ENCODE measurements at regions of chr19 and their contacts with region 1.

Region 1: DNA sequence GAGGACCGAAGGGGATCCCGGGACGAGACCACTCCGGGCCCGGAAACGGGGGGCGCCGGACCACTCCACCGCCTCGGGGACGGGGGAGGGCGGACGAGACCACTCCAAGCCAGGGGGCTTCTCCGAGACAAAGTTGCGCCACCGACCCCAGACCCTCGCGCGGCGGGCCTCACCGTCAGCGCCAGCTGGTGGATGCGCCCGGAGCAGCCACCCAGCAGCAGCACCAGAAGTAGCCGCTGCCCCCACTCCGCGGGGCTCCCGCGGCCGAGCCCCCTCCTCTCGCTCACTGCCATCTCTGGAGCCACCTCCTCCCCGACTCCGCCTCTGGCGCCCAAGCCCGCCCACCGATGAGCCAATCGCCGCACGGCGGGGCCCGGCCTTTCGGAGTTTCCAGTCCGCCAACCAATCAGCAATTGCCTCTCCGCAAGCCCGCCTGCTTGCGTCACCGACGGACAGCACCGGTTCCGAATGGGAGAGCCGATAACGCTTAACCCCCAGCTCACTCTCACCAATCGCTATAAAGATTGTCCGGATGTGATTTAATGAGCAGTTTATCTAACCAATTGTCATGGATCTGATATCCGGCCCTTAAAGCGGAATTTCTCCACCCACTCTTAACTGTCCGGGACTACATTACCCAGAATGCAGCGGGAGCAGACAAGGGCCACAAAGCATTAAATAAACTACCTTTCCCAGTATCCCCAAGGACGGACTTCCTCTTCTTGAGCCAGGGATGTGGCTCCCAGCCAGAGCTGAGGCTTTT is at the start of gene GPR108:
- DNase-seq: peak; percentile 98
- ATAC-seq: peak; percentile 74
- H3K4me3 Mint-ChIP-seq: peak within 1 kb of the TSS; percentile 96
- H3K27ac Mint-ChIP-seq: peak within 1 kb of the TSS; percentile 96
- H3K4me1 Mint-ChIP-seq: peaks cover 44% of the 10 kb centered on the region
- H3K27me3 Mint-ChIP-seq: no peaks in the 10 kb centered on the region
- CTCF ChIP-seq: no peak
- total RNA-seq, gene GPR108: 53.5 and 55.6 TPM in 2 replicates

Region 2: DNA sequence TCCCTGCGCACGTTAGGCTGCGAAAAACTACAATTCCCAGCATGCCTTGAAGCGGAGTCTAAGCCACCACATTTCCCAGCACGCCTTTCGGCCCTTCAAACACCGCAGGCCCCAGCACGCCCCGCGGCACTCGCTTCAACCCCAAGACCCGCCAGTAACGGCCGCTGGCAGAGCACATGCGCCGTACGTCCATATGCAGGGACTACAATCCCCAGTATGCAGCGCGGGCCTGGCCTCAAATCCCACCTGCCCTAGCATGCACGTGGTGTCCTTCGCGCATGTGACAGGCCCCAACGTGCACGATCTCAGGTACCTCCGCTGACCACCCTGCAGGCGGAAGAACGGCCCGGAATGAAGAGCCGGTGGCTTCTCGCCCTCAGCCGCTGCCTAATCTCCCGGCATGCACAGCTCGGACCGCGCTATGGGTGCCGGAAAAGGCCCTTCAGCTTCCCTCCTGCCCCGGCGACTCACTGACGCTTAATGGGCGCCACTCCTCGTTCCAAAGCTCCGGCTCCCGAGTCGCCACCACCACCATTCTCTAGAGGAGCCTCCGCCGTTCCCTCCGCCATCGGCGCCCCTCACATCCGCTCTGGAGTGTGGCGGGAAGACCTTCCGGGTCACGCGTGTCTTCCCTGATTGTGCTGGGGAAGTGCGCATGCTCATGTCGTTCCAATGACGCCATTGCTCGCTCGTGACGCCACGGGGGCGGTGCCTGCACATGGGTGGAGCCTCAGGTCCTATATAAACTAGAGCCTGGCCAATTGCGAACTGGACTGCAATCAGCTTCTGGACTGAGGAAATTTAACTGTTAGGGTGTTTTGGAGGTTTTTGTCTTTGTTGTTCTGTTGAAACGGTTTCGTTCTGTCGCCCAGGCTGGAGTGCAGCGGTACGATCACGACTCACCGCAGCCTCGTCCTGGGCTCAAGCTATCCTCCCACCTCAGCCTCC is 946.6 kb before region 1 on chr19 and contains the start of gene DUS3L:
- CTCF ChIA-PET with region 1: no interaction called
- POLR2A ChIA-PET with region 1: no interaction called
- intact Hi-C with region 1: loop called (anchors 5 kb)
- DNase-seq: peak; percentile 89
- ATAC-seq: peak; percentile 93
- H3K4me3 Mint-ChIP-seq: peak within 1 kb of the TSS; percentile 97
- H3K27ac Mint-ChIP-seq: peak within 1 kb of the TSS; percentile 100
- H3K4me1 Mint-ChIP-seq: peaks cover 15% of the 10 kb centered on the region
- H3K27me3 Mint-ChIP-seq: peaks cover 3% of the 10 kb centered on the region
- CTCF ChIP-seq: no peak
- total RNA-seq, gene DUS3L: 82.8 and 89.1 TPM in 2 replicates

Region 3: DNA sequence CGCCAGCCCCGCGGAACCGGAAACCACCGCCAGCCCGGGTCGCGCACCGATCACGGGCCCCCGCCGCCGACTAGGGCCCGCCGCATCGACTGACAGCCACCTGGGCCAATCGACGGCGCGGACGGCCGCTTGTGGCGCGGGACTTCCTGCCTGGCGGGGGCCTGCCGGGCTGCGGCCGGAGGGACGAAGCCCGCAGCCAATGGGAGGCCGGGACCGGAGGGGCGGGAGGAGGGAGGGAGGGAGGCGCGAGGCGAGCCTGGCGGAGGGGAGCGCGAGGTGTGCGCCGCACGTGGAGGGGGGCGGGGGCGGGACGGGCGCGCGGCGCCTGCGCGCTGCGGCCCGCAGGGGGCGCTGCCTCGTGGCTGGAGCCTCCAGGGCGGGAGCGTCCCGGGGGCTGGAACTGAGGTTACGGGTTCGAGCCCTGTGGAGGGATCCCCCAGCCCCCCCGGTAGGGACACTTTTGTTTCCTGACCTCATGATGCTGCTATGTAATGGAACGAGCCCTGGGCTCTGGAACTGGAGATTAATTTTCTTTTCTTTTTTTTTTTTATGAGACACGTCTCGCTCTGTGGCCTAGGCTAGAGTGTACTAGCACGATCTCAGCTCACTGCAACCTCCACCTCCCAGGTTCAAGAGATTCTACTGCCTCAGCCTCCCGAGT is 457.4 kb before region 1 on chr19 and contains the start of gene MLLT1:
- CTCF ChIA-PET with region 1: no interaction called
- POLR2A ChIA-PET with region 1: no interaction called
- intact Hi-C with region 1: loop called (anchors 5 kb)
- DNase-seq: peak; percentile 95
- ATAC-seq: peak; percentile 95
- H3K4me3 Mint-ChIP-seq: peak within 1 kb of the TSS; percentile 88
- H3K27ac Mint-ChIP-seq: peak within 1 kb of the TSS; percentile 68
- H3K4me1 Mint-ChIP-seq: peaks cover 35% of the 10 kb centered on the region
- H3K27me3 Mint-ChIP-seq: no peaks in the 10 kb centered on the region
- CTCF ChIP-seq: peak; percentile 36
- total RNA-seq, gene MLLT1: 39.0 and 41.3 TPM in 2 replicates

Region 4: DNA sequence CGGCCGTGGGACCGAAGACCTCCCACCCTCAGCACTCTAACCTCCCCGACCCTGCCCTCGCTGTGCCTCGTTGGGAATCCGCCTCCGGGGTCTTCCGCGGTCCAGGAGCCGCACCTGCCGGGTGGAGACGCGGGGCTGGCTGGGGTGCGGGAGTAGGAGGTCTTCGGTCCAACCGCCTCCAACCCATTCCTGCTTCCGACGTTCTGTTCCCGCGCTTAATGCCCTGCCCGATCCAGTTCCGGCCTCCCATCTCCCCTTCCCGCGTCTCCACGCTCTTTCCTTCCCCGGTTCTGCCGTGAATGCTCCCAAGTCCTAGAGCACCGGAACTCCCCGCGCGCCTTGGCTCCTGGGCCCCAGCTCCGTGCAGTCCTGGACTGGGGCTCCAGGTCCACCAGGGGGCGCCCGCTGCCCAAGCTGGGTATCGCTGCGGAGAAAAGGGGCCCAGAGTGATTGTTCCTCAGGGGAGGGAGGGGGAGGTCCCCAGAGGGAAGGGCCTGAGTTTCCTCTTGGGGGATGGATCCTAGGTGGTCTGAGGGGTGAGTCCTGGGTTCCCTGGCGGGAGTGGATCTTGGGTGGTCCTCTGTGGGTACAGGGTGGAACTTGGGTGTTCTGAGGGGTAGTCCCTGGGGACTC is 220.7 kb before region 1 on chr19:
- CTCF ChIA-PET with region 1: interaction called, 31 read pairs
- POLR2A ChIA-PET with region 1: interaction called, 34 read pairs
- intact Hi-C with region 1: loop called (anchors 1 kb)
- DNase-seq: peak; percentile 92
- ATAC-seq: peak; percentile 63
- H3K4me3 Mint-ChIP-seq: peak overlapping the region; percentile 97
- H3K27ac Mint-ChIP-seq: peak overlapping the region; percentile 59
- H3K4me1 Mint-ChIP-seq: peaks cover 45% of the 10 kb centered on the region
- H3K27me3 Mint-ChIP-seq: no peaks in the 10 kb centered on the region
- CTCF ChIP-seq: peak; percentile 84

Region 5: DNA sequence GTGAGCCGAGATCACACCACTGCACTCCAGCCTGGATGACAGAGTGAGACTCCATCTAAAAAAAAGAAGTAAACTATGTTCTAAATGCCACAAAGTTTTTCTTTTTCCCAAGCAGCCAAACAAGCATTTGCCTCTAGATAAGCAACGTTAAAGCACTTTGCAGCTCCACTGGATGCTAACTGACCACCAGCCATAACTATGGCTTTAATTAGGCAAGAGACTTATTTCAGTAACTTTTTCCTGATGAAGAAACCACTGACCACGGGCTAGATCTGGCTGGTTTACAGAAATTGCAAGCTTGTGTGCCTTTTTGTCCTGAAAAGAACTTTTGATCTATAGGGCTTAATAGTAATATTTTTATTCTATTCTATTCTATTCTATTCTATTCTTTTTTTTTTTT is 168.6 kb before region 1 on chr19:
- CTCF ChIA-PET with region 1: no interaction called
- POLR2A ChIA-PET with region 1: no interaction called
- intact Hi-C with region 1: no loop called
- DNase-seq: no peak
- ATAC-seq: no peak
- H3K4me3 Mint-ChIP-seq: no peak overlapping the region
- H3K27ac Mint-ChIP-seq: no peak overlapping the region
- H3K4me1 Mint-ChIP-seq: no peaks in the 10 kb centered on the region
- H3K27me3 Mint-ChIP-seq: peaks cover 16% of the 10 kb centered on the region
- CTCF ChIP-seq: no peak

Region 6: DNA sequence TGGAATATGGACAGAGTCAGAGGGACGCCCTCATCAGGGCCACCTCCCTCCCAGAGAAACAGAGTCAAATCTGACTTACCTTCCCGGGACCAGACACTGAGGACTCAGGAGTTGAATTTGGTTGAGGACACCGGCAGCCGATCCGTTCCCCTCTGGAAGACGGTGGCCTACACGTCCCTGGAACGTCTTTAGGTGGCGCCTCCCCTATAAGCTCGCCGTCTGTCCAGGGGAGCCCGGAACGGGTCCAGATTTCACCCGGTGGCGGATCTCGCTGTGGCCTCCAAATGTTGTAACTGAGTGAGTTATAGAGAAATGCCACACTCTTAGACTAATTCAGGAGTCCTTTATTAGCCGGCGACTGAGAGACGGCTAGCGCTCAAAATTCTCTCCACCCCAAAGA is 76.5 kb before region 1 on chr19:
- CTCF ChIA-PET with region 1: no interaction called
- POLR2A ChIA-PET with region 1: no interaction called
- intact Hi-C with region 1: loop called (anchors 2 kb)
- DNase-seq: no peak
- ATAC-seq: no peak
- H3K4me3 Mint-ChIP-seq: no peak overlapping the region
- H3K27ac Mint-ChIP-seq: no peak overlapping the region
- H3K4me1 Mint-ChIP-seq: peaks cover 19% of the 10 kb centered on the region
- H3K27me3 Mint-ChIP-seq: peaks cover 18% of the 10 kb centered on the region
- CTCF ChIP-seq: no peak

Region 7: GRCh38 chr19:6753178-6754031 is 15.9 kb after region 1 on chr19:
- CTCF ChIA-PET with region 1: interaction called, 4 read pairs
- POLR2A ChIA-PET with region 1: interaction called, 12 read pairs
- intact Hi-C with region 1: loop called (anchors 1 kb)
- DNase-seq: peak; percentile 91
- ATAC-seq: peak; percentile 93
- H3K4me3 Mint-ChIP-seq: peak overlapping the region; percentile 87
- H3K27ac Mint-ChIP-seq: peak overlapping the region; percentile 82
- H3K4me1 Mint-ChIP-seq: peaks cover 33% of the 10 kb centered on the region
- H3K27me3 Mint-ChIP-seq: no peaks in the 10 kb centered on the region
- CTCF ChIP-seq: no peak

Region 8: GRCh38 chr19:7348587-7349230 is 611.2 kb after region 1 on chr19 and contains the start of gene ARHGEF18:
- CTCF ChIA-PET with region 1: no interaction called
- POLR2A ChIA-PET with region 1: no interaction called
- intact Hi-C with region 1: loop called (anchors 5 kb)
- DNase-seq: peak; percentile 56
- ATAC-seq: peak; percentile 36
- H3K4me3 Mint-ChIP-seq: peak within 1 kb of the TSS; percentile 87
- H3K27ac Mint-ChIP-seq: peak within 1 kb of the TSS; percentile 95
- H3K4me1 Mint-ChIP-seq: peaks cover 90% of the 10 kb centered on the region
- H3K27me3 Mint-ChIP-seq: no peaks in the 10 kb centered on the region
- CTCF ChIP-seq: no peak
- total RNA-seq, gene ARHGEF18: 45.8 and 51.9 TPM in 2 replicates

Measured in activated B cell treated with CpG ODN at 0.5 μM for 24 hours (primary cell).